ENCODE measurements at regions of chr4 and their contacts with region 1.

Region 1: DNA sequence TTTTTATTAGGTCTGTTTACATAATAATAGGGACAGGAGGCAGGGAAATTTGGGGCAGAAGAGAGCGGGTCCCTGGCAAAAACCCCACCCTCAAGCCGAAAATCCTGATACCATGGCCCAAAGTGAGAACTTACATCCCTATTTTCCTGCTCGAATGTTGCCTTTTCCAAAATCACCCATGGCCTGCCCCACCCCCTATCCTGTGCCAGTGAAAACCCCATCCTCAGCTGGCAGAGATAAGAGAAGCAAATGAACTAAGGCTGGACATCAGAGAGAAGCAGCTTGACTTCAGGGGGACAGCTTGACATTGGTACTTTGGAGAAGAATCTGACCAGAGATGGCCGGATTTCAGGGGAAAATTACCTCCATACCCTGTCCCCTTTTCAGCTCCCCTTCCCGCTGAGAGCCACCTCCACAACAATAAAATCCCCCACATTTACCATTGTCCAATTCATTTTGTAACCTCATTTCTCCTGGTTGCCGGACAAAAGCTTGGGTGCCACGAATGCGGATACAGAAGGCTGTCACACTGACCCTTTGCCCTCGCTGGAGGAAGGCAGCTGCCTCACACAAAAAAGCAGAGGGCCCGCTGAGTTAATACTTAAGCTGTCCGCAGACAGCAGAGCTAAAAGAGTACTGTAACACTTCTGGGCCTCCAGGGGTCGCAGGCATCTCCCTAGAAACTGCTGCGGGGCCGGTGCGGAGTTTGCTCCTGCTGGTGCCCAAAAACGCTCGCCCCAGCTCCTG is 196.2 kb downstream of the SNCA start:
- DNase-seq: peak; percentile 80 to 82
- H3K4me3 ChIP-seq: peak overlapping the region; percentile 23
- H3K4me3 Mint-ChIP-seq: peak overlapping the region; percentile 75
- H3K27ac Mint-ChIP-seq: peak overlapping the region; percentile 95
- H3K4me1 ChIP-seq: peaks cover 7% of the 10 kb centered on the region; the same call in 1 of the 2 replicates
- H3K4me1 Mint-ChIP-seq: no peaks in the 10 kb centered on the region
- H3K27me3 ChIP-seq: no peaks in the 10 kb centered on the region
- H3K27me3 Mint-ChIP-seq: no peaks in the 10 kb centered on the region
- CTCF ChIP-seq: peak; percentile 76 to 82

Region 2: GRCh38 chr4:89685690-89686089 is 44.9 kb after region 1 on chr4:
- CTCF ChIA-PET with region 1: interaction called, 3 read pairs
- POLR2A ChIA-PET with region 1: no interaction called
- intact Hi-C with region 1: loop called (anchors 5 kb)
- DNase-seq: no peak
- H3K4me3 ChIP-seq: no peak overlapping the region
- H3K4me3 Mint-ChIP-seq: no peak overlapping the region
- H3K27ac Mint-ChIP-seq: no peak overlapping the region
- H3K4me1 ChIP-seq: peaks cover 5% of the 10 kb centered on the region; the same call in 1 of the 2 replicates
- H3K4me1 Mint-ChIP-seq: peaks cover 12% of the 10 kb centered on the region
- H3K27me3 ChIP-seq: no peaks in the 10 kb centered on the region
- H3K27me3 Mint-ChIP-seq: peaks cover 4% of the 10 kb centered on the region
- CTCF ChIP-seq: no peak

Region 3: GRCh38 chr4:89700769-89701423 is 60.1 kb after region 1 on chr4:
- CTCF ChIA-PET with region 1: interaction called, 12 read pairs
- POLR2A ChIA-PET with region 1: no interaction called
- intact Hi-C with region 1: no loop called
- DNase-seq: no peak
- H3K4me3 ChIP-seq: no peak overlapping the region
- H3K4me3 Mint-ChIP-seq: no peak overlapping the region
- H3K27ac Mint-ChIP-seq: no peak overlapping the region
- H3K4me1 ChIP-seq: no peaks in the 10 kb centered on the region
- H3K4me1 Mint-ChIP-seq: no peaks in the 10 kb centered on the region
- H3K27me3 ChIP-seq: no peaks in the 10 kb centered on the region
- H3K27me3 Mint-ChIP-seq: no peaks in the 10 kb centered on the region
- CTCF ChIP-seq: no peak

Region 4: DNA sequence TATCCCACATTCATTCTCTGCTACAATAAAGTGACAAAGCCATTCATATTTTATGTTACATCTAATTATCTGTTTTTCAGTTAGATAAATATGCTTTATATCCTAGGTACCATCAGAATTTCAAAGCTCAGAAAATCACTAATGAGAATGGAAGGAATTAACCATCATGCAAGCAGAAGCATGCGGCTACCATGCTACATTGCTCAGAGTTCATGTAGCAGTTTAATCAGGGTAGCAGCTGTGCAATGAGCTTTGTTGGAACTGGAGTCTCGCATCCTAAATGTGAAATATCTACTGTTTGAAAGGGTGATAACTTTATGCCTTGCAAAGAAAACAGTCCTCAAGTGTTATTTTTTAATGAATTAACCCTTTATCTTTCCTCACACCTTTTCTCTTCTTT is 118.6 kb after region 1 on chr4:
- CTCF ChIA-PET with region 1: interaction called, 10 read pairs
- POLR2A ChIA-PET with region 1: no interaction called
- intact Hi-C with region 1: no loop called
- DNase-seq: no peak
- H3K4me3 ChIP-seq: no peak overlapping the region
- H3K4me3 Mint-ChIP-seq: no peak overlapping the region
- H3K27ac Mint-ChIP-seq: no peak overlapping the region
- H3K4me1 ChIP-seq: no peaks in the 10 kb centered on the region
- H3K4me1 Mint-ChIP-seq: no peaks in the 10 kb centered on the region
- H3K27me3 ChIP-seq: no peaks in the 10 kb centered on the region
- H3K27me3 Mint-ChIP-seq: no peaks in the 10 kb centered on the region
- CTCF ChIP-seq: no peak

Region 5: DNA sequence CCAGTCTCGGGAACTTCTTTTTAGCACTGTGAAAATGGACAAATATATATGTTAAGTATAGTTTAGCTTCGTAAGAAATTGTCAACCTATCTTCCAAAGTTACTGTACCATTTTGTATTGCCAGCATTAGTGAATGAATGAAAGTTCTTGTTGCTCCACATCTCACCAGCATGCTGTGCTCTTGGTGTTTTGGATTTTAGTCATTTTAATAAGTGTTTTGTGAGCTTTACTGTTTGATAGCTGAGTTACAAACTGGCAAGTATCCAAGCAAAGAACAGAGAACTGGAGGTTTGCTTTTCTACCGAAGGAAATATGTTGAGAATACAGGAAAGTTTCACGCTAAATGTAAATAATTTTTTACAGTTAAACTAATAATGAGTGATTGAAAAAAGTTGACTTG is 163.1 kb after region 1 on chr4:
- CTCF ChIA-PET with region 1: no interaction called
- POLR2A ChIA-PET with region 1: interaction called, 11 read pairs
- intact Hi-C with region 1: no loop called
- DNase-seq: no peak
- H3K4me3 ChIP-seq: no peak overlapping the region
- H3K4me3 Mint-ChIP-seq: no peak overlapping the region
- H3K27ac Mint-ChIP-seq: no peak overlapping the region
- H3K4me1 ChIP-seq: peaks cover 7% of the 10 kb centered on the region; the same call in 1 of the 2 replicates
- H3K4me1 Mint-ChIP-seq: no peaks in the 10 kb centered on the region
- H3K27me3 ChIP-seq: no peaks in the 10 kb centered on the region
- H3K27me3 Mint-ChIP-seq: no peaks in the 10 kb centered on the region
- CTCF ChIP-seq: no peak

Region 6: DNA sequence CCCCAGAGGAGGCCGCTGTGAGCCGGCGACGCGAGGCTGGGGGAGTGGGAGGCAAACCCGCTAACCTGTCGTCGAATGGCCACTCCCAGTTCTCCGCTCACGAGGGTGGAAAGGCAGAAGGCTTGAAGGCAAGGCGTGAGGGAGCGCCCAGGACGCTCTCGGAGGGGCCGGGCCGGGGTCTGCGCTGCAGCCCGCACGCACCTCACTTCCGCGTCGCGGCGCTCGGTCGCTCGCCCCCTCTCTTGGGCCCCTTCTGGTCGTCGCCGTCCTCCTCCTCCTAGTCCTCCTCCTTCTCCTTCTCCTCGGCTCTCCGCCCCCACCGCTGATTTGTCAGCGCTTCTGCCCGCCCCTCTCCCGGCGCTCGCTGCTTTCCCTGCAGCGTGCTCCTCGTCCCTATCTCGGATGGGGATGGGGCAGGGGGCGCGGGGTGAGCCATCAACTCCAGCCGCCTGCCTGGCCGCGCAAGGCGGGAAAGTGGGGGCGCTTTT is 196.1 kb after region 1 on chr4 and contains the start of gene SNCA:
- CTCF ChIA-PET with region 1: no interaction called
- POLR2A ChIA-PET with region 1: no interaction called
- intact Hi-C with region 1: loop called (anchors 10 kb)
- DNase-seq: peak; percentile 67 to 75
- H3K4me3 ChIP-seq: peak within 1 kb of the TSS; percentile 52
- H3K4me3 Mint-ChIP-seq: peak within 1 kb of the TSS; percentile 84
- H3K27ac Mint-ChIP-seq: no peak within 1 kb of the TSS
- H3K4me1 ChIP-seq: no peaks in the 10 kb centered on the region
- H3K4me1 Mint-ChIP-seq: peaks cover 9% of the 10 kb centered on the region
- H3K27me3 ChIP-seq: no peaks in the 10 kb centered on the region
- H3K27me3 Mint-ChIP-seq: peaks cover 12% of the 10 kb centered on the region
- CTCF ChIP-seq: no peak
- total RNA-seq, gene SNCA: 5.7 and 8.4 TPM in 2 replicates

Region 7: DNA sequence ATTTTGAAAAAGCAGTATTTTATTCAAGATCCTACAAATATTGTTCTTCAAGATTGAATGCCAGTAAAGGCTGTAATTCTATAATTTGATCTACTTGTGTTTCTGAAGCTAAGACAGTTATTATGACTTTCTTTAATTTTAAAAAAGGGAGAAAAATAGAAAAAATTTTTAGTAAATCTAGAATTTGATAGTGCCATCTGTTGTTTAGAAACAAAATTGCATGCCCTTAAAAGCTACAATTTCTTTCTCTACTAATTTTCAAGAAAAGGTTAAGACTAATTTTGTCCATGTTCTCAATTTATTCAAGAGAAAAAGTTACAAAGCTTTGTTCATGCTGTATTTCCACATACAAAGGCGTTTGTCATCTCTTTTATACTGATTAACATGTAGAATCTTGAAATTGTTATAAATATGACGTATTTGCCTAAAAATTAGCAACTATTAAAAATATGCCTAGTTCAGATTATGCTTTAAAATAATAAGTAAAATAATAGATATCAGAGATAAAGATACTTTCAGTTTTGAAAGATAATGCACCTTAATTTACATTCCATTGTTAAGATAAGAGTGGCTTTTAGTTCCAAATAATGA is 228.3 kb after region 1 on chr4:
- CTCF ChIA-PET with region 1: interaction called, 12 read pairs
- POLR2A ChIA-PET with region 1: no interaction called
- intact Hi-C with region 1: no loop called
- DNase-seq: no peak
- H3K4me3 ChIP-seq: no peak overlapping the region
- H3K4me3 Mint-ChIP-seq: no peak overlapping the region
- H3K27ac Mint-ChIP-seq: no peak overlapping the region
- H3K4me1 ChIP-seq: peaks cover 5% of the 10 kb centered on the region; the same call in 1 of the 2 replicates
- H3K4me1 Mint-ChIP-seq: peaks cover 6% of the 10 kb centered on the region
- H3K27me3 ChIP-seq: no peaks in the 10 kb centered on the region
- H3K27me3 Mint-ChIP-seq: no peaks in the 10 kb centered on the region
- CTCF ChIP-seq: peak in 1 of 2 experiments; percentile 49